ENCODE measurements at regions of chr16 and their contacts with region 1.

Region 1: GRCh38 chr16:20849587-20850390 is 43.5 kb downstream of the REXO5 start:
- DNase-seq: peak; percentile 64 to 89 (median 77)
- ATAC-seq: peak in 1 of 2 donors; percentile 29
- H3K4me3 ChIP-seq: no peak overlapping the region
- H3K27ac ChIP-seq: no peak overlapping the region
- H3K4me1 ChIP-seq: peaks cover 13% of the 10 kb centered on the region
- H3K27me3 ChIP-seq: no peaks in the 10 kb centered on the region

Region 2: GRCh38 chr16:20900299-20901067 is 50.7 kb after region 1 on chr16 and contains the starts of genes DCUN1D3 and LYRM1:
- intact Hi-C with region 1: loop called (anchors 5 to 10 kb)
- DNase-seq: peak; percentile 98 to 99 (median 99)
- ATAC-seq: peak; percentile 95 to 96
- H3K4me3 ChIP-seq: peak within 1 kb of the TSS; percentile 67
- H3K27ac ChIP-seq: peak within 1 kb of the TSS; percentile 89
- H3K4me1 ChIP-seq: peaks cover 11% of the 10 kb centered on the region
- H3K27me3 ChIP-seq: no peaks in the 10 kb centered on the region
- total RNA-seq, gene DCUN1D3: 8.6 to 20.2 (median 11.0) TPM
- total RNA-seq, gene LYRM1: 29.5 to 36.4 (median 35.5) TPM

Region 3: DNA sequence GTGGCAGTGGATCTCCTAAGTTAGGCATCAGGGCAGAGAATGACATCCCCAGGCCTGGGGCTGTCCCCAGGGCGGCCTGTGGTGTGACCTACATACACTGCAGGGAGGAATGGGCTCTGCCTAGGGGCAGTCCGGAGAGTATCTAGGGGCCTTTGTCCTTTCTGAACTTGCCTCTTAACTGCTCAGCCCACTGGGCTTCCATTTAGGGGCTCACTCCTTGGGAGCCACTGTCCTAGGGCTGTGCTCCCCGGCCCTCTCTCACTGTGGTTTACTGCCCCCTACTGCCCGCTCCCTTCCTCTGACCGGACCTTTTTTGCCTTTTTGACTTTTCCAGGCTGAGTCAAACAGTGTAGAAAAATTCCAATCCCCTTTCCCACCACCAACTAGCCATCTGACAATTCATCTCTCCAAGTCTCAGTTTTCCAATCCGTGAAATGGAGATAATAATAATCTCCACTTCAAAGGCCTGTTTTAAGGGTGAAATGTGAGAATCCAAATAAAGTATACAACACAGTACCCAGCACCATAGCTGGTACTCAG is 234.0 kb after region 1 on chr16:
- intact Hi-C with region 1: loop called (anchors 2 to 5 kb)
- DNase-seq: peak; percentile 70 to 86 (median 85)
- ATAC-seq: peak; percentile 94 to 95
- H3K4me3 ChIP-seq: no peak overlapping the region
- H3K27ac ChIP-seq: no peak overlapping the region
- H3K4me1 ChIP-seq: no peaks in the 10 kb centered on the region
- H3K27me3 ChIP-seq: no peaks in the 10 kb centered on the region